Aorta (tissue), 5 donors: ENCODE measurements at regions of chr13 and their contacts with region 1.

Region 1: DNA sequence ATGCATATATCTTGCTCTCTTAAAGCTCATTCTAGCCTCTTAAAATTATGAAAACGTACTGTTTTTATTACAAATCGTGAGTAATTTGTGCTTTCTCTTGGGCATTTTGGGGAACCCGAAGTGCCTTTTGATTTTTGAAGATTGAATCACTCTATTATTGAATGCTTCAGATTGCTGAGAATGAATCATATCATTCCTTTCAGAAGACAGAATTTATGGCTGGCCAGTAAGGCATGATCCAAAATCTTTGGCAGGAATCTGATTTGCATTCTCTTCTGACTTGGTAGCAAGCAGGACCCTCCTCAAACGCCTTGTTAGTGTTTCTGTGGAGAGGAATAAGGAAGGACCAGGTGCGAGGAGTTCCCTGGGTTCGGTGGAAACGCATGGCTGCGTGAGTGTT is 49.5 kb downstream of the STARD13 start:
- DNase-seq: no peak
- ATAC-seq: no peak
- H3K4me3 ChIP-seq: no peak overlapping the region
- H3K27ac ChIP-seq: peak overlapping the region in 1 of 2 donors; percentile 92
- H3K4me1 ChIP-seq: peaks cover 4 to 6% of the 10 kb centered on the region in 2 donors
- H3K27me3 ChIP-seq: no peaks in the 10 kb centered on the region

Region 2: DNA sequence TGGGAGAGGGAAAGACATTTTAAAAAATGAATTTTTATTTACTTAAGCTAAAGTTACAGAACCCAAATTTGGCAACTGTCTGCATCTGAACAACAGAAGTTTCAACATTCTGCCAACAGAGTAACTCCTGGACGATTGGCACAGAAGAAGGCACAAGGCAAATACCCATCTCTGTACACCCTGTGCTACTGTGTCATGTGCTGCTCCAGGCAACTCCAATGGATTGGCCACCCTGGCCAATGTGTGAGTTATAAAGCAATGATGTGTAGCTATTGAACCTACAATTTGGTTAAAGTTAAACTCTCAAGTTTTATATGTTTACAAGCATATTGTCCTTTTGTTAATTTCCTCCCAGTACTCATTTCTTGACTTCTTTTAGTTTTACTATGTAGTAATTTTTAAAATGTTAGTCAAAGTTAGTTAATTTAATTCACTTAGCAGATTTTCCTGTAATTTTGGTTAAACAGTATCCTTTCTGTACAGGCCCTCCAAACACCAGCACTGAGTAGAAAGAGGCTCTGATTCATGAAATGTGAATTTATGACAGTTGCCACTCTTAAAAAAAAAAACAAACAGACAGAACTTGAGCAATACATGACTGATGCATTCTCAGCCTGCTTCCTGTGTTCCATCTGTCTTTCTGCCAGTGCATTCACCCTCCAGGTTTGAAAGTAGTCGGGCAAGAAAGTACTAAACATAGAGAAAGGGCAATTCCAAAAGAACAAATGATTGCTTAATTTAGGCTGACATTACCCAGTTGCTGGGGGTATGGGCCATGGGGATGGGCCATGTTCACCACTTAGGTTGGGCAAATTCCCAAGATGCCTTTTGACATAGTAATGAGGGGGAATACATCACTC is 43.6 kb after region 1 on chr13:
- intact Hi-C with region 1: loop called (anchors 5 kb)
- DNase-seq: no peak
- ATAC-seq: no peak
- H3K4me3 ChIP-seq: no peak overlapping the region
- H3K27ac ChIP-seq: peak overlapping the region; percentile 57 to 74
- H3K4me1 ChIP-seq: peaks cover 2 to 25% of the 10 kb centered on the region in 2 donors
- H3K27me3 ChIP-seq: no peaks in the 10 kb centered on the region